ENCODE measurements at regions of chr11 and their contacts with region 1.

Region 1: DNA sequence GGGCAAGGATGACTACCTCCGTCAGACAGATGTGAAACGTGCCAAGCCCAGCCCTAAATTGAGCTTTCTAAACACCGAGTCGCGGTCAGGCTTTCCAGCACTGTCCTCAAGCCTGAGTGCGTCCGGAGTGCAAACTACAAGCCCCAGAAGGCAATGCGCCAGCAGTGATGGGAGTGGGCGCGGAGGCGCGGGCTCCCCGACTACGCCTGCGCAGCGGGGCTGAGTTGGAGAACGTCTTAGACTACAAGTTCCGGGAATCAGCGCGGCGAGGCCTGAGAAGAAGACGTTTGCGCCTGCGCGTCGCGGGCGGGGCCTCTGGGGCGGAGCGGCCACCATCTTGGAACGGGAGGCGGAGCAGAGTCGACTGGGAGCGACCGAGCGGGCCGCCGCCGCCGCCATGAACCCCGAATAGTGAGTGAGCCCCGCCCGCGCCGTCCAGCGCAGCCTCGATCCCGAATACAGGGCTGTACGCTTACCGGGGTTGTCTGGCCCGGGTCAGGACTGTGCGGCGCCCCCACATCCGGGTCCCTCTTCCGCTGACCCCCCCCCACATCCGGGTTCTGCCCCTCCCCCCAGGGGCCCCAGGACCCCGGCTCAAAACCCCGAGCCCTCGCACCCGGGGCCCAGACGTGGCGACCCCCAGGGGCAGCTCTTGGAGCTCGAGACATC is at the start of gene RAB1B:
- DNase-seq: peak; percentile 99 to 100 (median 99)
- ATAC-seq: peak; percentile 89
- H3K4me3 ChIP-seq: peak within 1 kb of the TSS; percentile 91
- H3K4me3 Mint-ChIP-seq: peak within 1 kb of the TSS; percentile 88 to 100 (median 95)
- H3K27ac ChIP-seq: peak within 1 kb of the TSS; percentile 90
- H3K27ac Mint-ChIP-seq: peak within 1 kb of the TSS; percentile 95 to 99 (median 97)
- H3K4me1 ChIP-seq: peaks cover 16 to 38% of the 10 kb centered on the region in 2 donors
- H3K4me1 Mint-ChIP-seq: peaks cover 26 to 48% (median 34%) of the 10 kb centered on the region in 7 donors
- H3K27me3 ChIP-seq: no peaks in the 10 kb centered on the region
- H3K27me3 Mint-ChIP-seq: peaks cover 0 to 3% (median 0%) of the 10 kb centered on the region in 5 donors
- total RNA-seq, gene RAB1B: 60.6 to 151 (median 70.7) TPM

Region 2: DNA sequence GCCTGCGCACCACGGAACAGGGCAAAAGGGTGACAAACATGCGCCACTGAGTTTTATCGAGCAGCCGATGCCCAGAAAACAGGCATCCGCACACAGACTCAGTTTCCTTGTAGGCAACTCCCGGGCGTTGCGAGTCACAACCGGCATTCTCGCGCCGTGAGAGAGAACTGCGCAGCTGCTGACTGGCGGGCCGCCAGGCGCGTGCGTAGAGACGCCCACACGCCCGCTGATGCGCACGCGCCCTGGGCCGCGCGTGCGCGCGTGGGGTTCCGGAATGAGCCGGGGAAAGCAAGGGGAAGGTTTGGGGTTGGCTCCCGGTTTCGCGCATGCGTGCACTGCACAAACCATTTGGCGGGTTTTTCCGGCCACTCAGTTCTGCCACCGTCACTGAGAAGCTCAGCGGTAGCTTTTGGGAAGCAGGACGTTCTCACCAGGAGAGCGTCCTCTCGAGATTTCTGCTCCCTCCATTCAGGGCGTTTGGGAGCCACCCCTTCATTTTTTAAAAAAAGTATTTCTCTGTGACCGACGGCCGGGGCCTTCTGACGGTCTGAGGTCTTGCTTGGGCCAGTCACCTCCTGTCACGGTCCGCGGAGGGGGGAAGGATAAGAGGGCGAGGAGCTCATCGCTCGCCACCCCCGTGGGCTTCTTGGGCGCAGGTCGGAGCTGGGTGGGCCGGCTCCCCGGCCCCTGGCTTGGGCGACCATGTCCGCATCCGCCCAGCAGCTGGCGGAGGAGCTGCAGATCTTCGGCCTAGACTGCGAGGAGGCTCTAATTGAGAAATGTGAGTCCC is 1006.6 kb before region 1 on chr11 and contains the start of gene POLA2:
- CTCF ChIA-PET with region 1: no interaction called
- POLR2A ChIA-PET with region 1: no interaction called
- intact Hi-C with region 1: loop called in 1 of 2 experiments (anchors 10 kb)
- DNase-seq: peak; percentile 94 to 99 (median 98)
- ATAC-seq: peak; percentile 96
- H3K4me3 ChIP-seq: peak within 1 kb of the TSS; percentile 88
- H3K4me3 Mint-ChIP-seq: peak within 1 kb of the TSS; percentile 83 to 95 (median 92)
- H3K27ac ChIP-seq: peak within 1 kb of the TSS; percentile 88
- H3K27ac Mint-ChIP-seq: peak within 1 kb of the TSS; percentile 91 to 98 (median 97)
- H3K4me1 ChIP-seq: peaks cover 9 to 18% of the 10 kb centered on the region in 2 donors
- H3K4me1 Mint-ChIP-seq: peaks cover 20 to 62% (median 50%) of the 10 kb centered on the region in 7 donors
- H3K27me3 ChIP-seq: no peaks in the 10 kb centered on the region
- H3K27me3 Mint-ChIP-seq: peaks cover 0 to 2% (median 0%) of the 10 kb centered on the region in 5 donors
- total RNA-seq, gene POLA2: 13.4 to 51.6 (median 27.8) TPM

Region 3: GRCh38 chr11:66051766-66052663 is 216.4 kb before region 1 on chr11 and contains the start of gene SF3B2:
- CTCF ChIA-PET with region 1: no interaction called
- POLR2A ChIA-PET with region 1: no interaction called
- intact Hi-C with region 1: loop called in 1 of 2 experiments (anchors 5 kb)
- DNase-seq: peak; percentile 81 to 94 (median 93)
- ATAC-seq: peak; percentile 99
- H3K4me3 ChIP-seq: peak within 1 kb of the TSS; percentile 88
- H3K4me3 Mint-ChIP-seq: peak within 1 kb of the TSS; percentile 95 to 100 (median 98)
- H3K27ac ChIP-seq: peak within 1 kb of the TSS; percentile 93
- H3K27ac Mint-ChIP-seq: peak within 1 kb of the TSS; percentile 95 to 99 (median 98)
- H3K4me1 ChIP-seq: peaks cover 14 to 18% of the 10 kb centered on the region in 2 donors
- H3K4me1 Mint-ChIP-seq: peaks cover 17 to 44% (median 38%) of the 10 kb centered on the region in 7 donors
- H3K27me3 ChIP-seq: no peaks in the 10 kb centered on the region
- H3K27me3 Mint-ChIP-seq: peaks cover 0 to 9% (median 0%) of the 10 kb centered on the region in 5 donors
- total RNA-seq, gene SF3B2: 163 to 248 (median 206) TPM

Region 4: DNA sequence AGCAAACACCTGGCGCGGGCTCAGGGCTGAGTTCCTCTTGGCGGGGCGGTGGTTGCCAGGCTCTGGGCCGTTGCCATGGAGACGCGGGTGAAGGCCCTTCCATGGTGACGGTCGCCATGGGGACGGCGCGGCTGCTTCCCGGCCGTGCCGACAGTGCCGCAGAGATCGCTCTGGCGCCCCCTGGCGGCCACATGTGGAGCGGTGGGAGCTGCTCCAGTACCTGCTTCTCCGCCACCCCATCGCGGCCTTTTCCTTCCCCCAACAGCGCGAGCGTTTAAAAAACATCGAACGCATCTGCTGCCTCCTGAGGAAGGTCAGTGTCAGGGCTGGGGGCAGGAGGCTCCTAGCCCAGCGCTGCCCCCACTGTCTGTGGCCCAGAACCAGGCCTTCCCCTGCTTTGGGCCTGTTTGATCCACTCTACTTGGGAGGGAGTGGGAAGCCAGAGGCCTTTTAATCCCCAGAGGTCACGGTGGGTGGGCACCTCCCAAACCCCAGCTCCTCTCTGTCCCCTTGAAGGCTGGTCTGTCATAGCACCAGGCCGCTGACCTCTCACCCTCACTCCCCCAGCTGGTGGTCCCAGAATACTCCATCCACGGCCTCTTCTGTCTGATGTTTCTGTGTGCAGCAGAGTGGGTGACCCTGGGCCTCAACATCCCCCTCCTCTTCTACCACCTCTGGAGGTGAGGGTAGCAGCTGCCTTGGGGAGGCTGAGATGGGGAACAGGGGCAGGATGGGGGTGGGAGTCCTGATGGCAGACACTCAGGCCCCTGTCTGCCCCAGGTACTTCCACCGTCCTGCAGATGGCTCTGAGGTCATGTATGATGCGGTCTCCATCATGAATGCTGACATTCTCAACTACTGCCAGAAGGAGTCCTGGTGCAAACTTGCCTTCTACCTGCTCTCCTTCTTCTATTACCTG is 14.3 kb after region 1 on chr11:
- CTCF ChIA-PET with region 1: interaction called, 4 read pairs
- POLR2A ChIA-PET with region 1: interaction called, 56 read pairs
- intact Hi-C with region 1: loop called (anchors 1 kb)
- DNase-seq: peak; percentile 96 to 100 (median 99)
- ATAC-seq: peak; percentile 94
- H3K4me3 ChIP-seq: no peak overlapping the region
- H3K4me3 Mint-ChIP-seq: peak overlapping the region in 9 of 10 donors; percentile 16 to 72 (median 59)
- H3K27ac ChIP-seq: peak overlapping the region; percentile 27
- H3K27ac Mint-ChIP-seq: peak overlapping the region; percentile 68 to 93 (median 85)
- H3K4me1 ChIP-seq: peaks cover 16 to 21% of the 10 kb centered on the region in 2 donors
- H3K4me1 Mint-ChIP-seq: peaks cover 18 to 52% (median 37%) of the 10 kb centered on the region in 7 donors
- H3K27me3 ChIP-seq: no peaks in the 10 kb centered on the region
- H3K27me3 Mint-ChIP-seq: peaks cover 0 to 14% (median 0%) of the 10 kb centered on the region in 5 donors

Region 5: GRCh38 chr11:66344550-66345315 is 76.3 kb after region 1 on chr11 and contains the start of gene BRMS1:
- CTCF ChIA-PET with region 1: no interaction called
- POLR2A ChIA-PET with region 1: no interaction called
- intact Hi-C with region 1: loop called (anchors 1 to 5 kb)
- DNase-seq: peak; percentile 85 to 98 (median 93)
- ATAC-seq: peak; percentile 94
- H3K4me3 ChIP-seq: peak within 1 kb of the TSS; percentile 73
- H3K4me3 Mint-ChIP-seq: peak within 1 kb of the TSS; percentile 94 to 98 (median 96)
- H3K27ac ChIP-seq: peak within 1 kb of the TSS; percentile 92
- H3K27ac Mint-ChIP-seq: peak within 1 kb of the TSS; percentile 91 to 98 (median 96)
- H3K4me1 ChIP-seq: peaks cover 30 to 36% of the 10 kb centered on the region in 2 donors
- H3K4me1 Mint-ChIP-seq: peaks cover 25 to 62% (median 52%) of the 10 kb centered on the region in 7 donors
- H3K27me3 ChIP-seq: no peaks in the 10 kb centered on the region
- H3K27me3 Mint-ChIP-seq: peaks cover 0 to 4% (median 0%) of the 10 kb centered on the region in 5 donors
- total RNA-seq, gene BRMS1: 35.9 to 50.8 (median 48.4) TPM